Sigmoid colon (tissue), 7 donors: ENCODE measurements at regions of chrX and their contacts with region 1.

Region 1: GRCh38 chrX:41180194-41180908 is 95.1 kb downstream of the USP9X start:
- DNase-seq: no peak
- H3K4me3 ChIP-seq: no peak overlapping the region
- H3K27ac ChIP-seq: no peak overlapping the region
- H3K4me1 ChIP-seq: peaks cover 0 to 7% (median 0%) of the 10 kb centered on the region in 4 donors
- H3K27me3 ChIP-seq: no peaks in the 10 kb centered on the region
- CTCF ChIP-seq: peak; percentile 8 to 47 (median 30)
- EP300 ChIP-seq: no peak
- POLR2A ChIP-seq: no peak

Region 2: GRCh38 chrX:40806513-40807220 is 373.7 kb before region 1 on chrX:
- intact Hi-C with region 1: no loop called
- DNase-seq: no peak
- H3K4me3 ChIP-seq: no peak overlapping the region
- H3K27ac ChIP-seq: no peak overlapping the region
- H3K4me1 ChIP-seq: no peaks in the 10 kb centered on the region
- H3K27me3 ChIP-seq: no peaks in the 10 kb centered on the region
- CTCF ChIP-seq: no peak
- EP300 ChIP-seq: no peak
- POLR2A ChIP-seq: no peak

Region 3: GRCh38 chrX:41250867-41251266 is 70.5 kb after region 1 on chrX:
- intact Hi-C with region 1: loop called (anchors 5 kb)
- DNase-seq: no peak
- H3K4me3 ChIP-seq: no peak overlapping the region
- H3K27ac ChIP-seq: no peak overlapping the region
- H3K4me1 ChIP-seq: peaks cover 0 to 13% (median 0%) of the 10 kb centered on the region in 4 donors
- H3K27me3 ChIP-seq: peaks cover 0 to 2% (median 0%) of the 10 kb centered on the region in 3 donors
- CTCF ChIP-seq: no peak
- EP300 ChIP-seq: no peak
- POLR2A ChIP-seq: no peak